Uterus (tissue), 4 donors: ENCODE measurements at regions of chr20 and their contacts with region 1.

Region 1: DNA sequence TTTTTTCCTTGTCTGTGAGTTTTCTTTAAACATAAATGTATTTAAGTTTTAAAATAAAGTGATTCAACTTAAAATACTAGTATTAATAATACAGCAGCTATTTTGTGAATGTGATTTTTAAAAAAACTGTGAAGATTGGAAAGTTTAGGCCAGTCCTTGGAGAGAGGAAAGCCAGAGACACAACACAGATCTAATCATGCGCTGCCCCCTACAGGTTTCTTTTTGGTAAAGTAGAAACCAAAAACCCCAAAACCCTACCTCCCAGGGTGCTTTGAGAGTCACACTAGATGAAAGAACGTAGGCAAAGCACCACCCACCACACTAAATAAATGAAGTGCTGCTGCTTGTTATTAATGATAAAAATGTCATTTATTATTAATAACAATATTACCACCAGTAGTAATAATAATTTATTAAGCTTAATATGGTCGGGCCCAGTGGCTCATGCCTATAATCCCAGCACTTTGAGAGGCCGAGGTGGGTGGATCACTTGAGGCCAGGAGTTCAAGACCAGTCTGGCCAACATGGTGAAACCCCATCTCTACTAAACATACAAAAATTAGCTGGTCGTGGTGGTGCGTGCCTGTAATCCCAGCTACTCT is 33.7 kb downstream of the SLC9A8 start:
- DNase-seq: peak in 1 of 2 donors; percentile 56
- H3K4me3 ChIP-seq: no peak overlapping the region
- H3K27ac ChIP-seq: no peak overlapping the region
- H3K4me1 ChIP-seq: no peaks in the 10 kb centered on the region
- H3K27me3 ChIP-seq: no peaks in the 10 kb centered on the region
- CTCF ChIP-seq: peak; percentile 50 to 76 (median 60)
- POLR2A ChIP-seq: no peak

Region 2: DNA sequence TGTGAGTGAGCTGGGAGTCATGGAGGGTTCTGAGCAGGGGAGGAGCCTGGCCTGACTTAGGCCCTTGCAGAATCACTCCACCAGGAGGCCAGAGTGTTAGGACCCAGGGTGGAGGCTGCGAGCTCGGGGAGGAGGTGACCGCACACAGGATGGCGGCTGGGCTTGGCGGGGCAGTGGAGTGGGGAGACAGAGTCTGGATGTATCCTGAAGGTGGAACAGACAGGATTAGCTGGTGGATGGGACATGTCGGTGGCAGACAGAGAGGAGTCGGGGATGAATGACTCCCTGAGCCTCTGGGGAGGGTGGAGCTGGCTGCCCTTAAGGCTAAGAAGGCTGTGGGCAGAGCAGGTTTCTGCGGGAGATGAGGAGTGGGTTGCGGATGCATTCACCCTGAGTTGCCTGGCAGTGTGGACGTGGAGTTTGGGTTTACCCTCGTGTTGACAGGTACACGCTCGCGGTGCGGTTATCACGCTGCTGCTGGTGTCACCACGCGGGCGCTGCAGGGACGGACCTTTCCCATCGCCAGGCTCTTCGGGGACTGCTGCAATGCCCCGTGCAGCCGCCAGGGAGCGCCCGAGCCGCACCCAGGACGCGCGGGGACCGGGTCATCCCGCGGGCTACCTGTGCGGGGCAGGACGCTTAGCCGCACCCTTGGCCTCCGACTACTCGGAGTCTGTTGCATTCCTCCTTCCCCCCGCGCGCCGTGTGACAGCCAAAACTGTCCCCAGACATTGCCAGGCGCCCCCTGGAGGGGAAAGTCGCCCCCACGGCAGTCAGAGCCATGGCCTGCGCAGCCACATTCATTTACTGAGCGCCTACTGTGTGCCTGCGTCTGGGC is 235.4 kb before region 1 on chr20:
- intact Hi-C with region 1: loop called (anchors 5 kb)
- DNase-seq: peak; percentile 65 to 79
- H3K4me3 ChIP-seq: no peak overlapping the region
- H3K27ac ChIP-seq: no peak overlapping the region
- H3K4me1 ChIP-seq: peaks cover 0 to 7% of the 10 kb centered on the region in 2 donors
- H3K27me3 ChIP-seq: no peaks in the 10 kb centered on the region
- CTCF ChIP-seq: peak; percentile 99 to 100 (median 99)
- POLR2A ChIP-seq: peak in 1 of 2 donors; percentile 44

Region 3: GRCh38 chr20:49685809-49686208 is 160.5 kb before region 1 on chr20:
- intact Hi-C with region 1: no loop called
- DNase-seq: no peak
- H3K4me3 ChIP-seq: no peak overlapping the region
- H3K27ac ChIP-seq: peak overlapping the region in 1 of 2 donors; percentile 58
- H3K4me1 ChIP-seq: peaks cover under 1 to 6% of the 10 kb centered on the region in 2 donors
- H3K27me3 ChIP-seq: no peaks in the 10 kb centered on the region
- CTCF ChIP-seq: no peak
- POLR2A ChIP-seq: no peak

Region 4: GRCh38 chr20:49964964-49965780 is 118.9 kb after region 1 on chr20:
- intact Hi-C with region 1: no loop called
- DNase-seq: no peak
- H3K4me3 ChIP-seq: no peak overlapping the region
- H3K27ac ChIP-seq: no peak overlapping the region
- H3K4me1 ChIP-seq: no peaks in the 10 kb centered on the region
- H3K27me3 ChIP-seq: no peaks in the 10 kb centered on the region
- CTCF ChIP-seq: peak in 1 of 4 experiments; percentile 25
- POLR2A ChIP-seq: no peak